ENCODE measurements at regions of chr1 and their contacts with region 1.

Region 1: DNA sequence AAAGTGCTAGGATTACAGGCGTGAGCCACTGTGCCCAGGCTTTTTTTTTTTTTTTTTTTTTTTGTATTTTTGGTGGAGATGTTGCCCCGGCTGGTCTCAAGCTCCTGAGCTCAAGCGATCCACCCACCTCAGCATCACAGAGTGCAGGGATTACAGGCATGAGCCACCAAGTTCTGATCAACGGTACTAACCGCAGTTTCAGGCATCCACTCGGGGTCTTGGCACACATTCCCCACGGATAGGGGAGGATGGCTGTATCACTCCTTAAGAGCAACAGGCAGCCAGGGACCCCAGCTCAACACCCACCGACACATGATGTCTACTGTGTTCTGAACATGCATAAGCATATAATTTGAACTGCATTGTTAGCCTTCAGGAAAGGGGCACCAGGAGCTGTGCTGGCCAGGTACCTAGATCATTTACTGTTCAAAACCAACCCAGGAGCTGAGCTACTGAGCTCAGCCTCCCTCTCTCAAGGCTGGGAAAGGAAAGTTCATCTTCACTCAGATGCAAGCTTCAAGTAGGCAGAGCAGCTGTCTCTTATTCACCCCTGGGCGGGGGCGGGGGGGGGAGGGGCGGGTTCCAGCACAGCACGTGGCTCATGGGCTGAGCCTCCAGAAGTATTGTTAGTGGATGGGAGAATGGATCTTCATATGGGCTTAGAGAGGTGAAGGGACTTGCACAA is 24.7 kb downstream of the CAPZB start:
- DNase-seq: no peak
- H3K4me3 Mint-ChIP-seq: peak overlapping the region; percentile 61
- H3K27ac Mint-ChIP-seq: peak overlapping the region; percentile 72
- H3K4me1 Mint-ChIP-seq: peaks cover 73% of the 10 kb centered on the region
- H3K27me3 Mint-ChIP-seq: no peaks in the 10 kb centered on the region

Region 2: GRCh38 chr1:19448491-19449439 is 11.9 kb before region 1 on chr1:
- intact Hi-C with region 1: loop called (anchors 1 kb)
- DNase-seq: no peak
- H3K4me3 Mint-ChIP-seq: peak overlapping the region; percentile 58
- H3K27ac Mint-ChIP-seq: peak overlapping the region; percentile 90
- H3K4me1 Mint-ChIP-seq: peaks cover 68% of the 10 kb centered on the region
- H3K27me3 Mint-ChIP-seq: no peaks in the 10 kb centered on the region